ENCODE measurements at regions of chr14 and their contacts with region 1.

Region 1: GRCh38 chr14:69460093-69460701 is 24.3 kb upstream of the PLEKHD1 start:
- DNase-seq: peak; percentile 25
- ATAC-seq: peak; percentile 96
- H3K4me3 ChIP-seq: no peak overlapping the region
- H3K27ac ChIP-seq: no peak overlapping the region
- H3K4me1 ChIP-seq: no peaks in the 10 kb centered on the region
- H3K27me3 ChIP-seq: no peaks in the 10 kb centered on the region
- CTCF ChIP-seq: peak; percentile 69 to 91 (median 81); a peak in 5 of 6 replicates
- EP300 ChIP-seq: no peak
- POLR2A ChIP-seq: no peak
- RAD21 ChIP-seq: peak; percentile 92

Region 2: GRCh38 chr14:69247676-69248440 is 212.3 kb before region 1 on chr14:
- CTCF ChIA-PET with region 1: interaction called, 126 read pairs
- POLR2A ChIA-PET with region 1: no interaction called
- RAD21 ChIA-PET with region 1: interaction called, 55 read pairs
- SMC1A ChIA-PET with region 1: interaction called, 62 read pairs
- in situ Hi-C with region 1: loop called (anchors 5 kb)
- intact Hi-C with region 1: no loop called
- DNase-seq: no peak
- ATAC-seq: no peak
- H3K4me3 ChIP-seq: no peak overlapping the region
- H3K27ac ChIP-seq: no peak overlapping the region
- H3K4me1 ChIP-seq: no peaks in the 10 kb centered on the region
- H3K27me3 ChIP-seq: no peaks in the 10 kb centered on the region
- CTCF ChIP-seq: peak in 2 of 3 experiments; percentile 16 to 17; a peak in 2 of 6 replicates
- EP300 ChIP-seq: no peak
- POLR2A ChIP-seq: no peak
- RAD21 ChIP-seq: peak; percentile 28; the same call in 1 of the 2 replicates

Region 3: DNA sequence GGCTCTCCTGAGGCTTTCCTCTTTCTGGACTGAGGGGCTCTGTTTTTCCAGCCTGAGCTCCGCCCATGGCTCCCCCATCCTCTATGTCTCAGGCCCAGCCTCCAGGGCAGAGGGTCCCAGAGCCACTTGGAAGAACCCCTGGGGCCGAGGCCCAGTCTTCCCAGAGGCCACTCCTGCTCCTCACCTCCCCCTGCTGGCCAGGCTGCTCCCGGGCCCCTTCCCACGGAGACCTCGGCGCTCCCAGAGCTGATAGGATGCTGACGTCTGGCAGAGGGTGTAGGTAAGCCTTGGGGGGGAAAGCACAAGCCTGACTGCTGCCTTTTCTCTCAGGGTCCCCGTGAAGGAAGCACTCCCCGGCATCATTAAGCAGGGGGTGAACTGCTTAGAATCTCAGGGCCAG is 113.5 kb before region 1 on chr14:
- CTCF ChIA-PET with region 1: interaction called, 12 read pairs
- POLR2A ChIA-PET with region 1: no interaction called
- RAD21 ChIA-PET with region 1: interaction called, 11 read pairs
- SMC1A ChIA-PET with region 1: interaction called, 12 read pairs
- in situ Hi-C with region 1: no loop called
- intact Hi-C with region 1: no loop called
- DNase-seq: no peak
- ATAC-seq: peak; percentile 34; the same call in 2 of the 3 replicates
- H3K4me3 ChIP-seq: no peak overlapping the region
- H3K27ac ChIP-seq: no peak overlapping the region
- H3K4me1 ChIP-seq: peaks cover 7% of the 10 kb centered on the region
- H3K27me3 ChIP-seq: no peaks in the 10 kb centered on the region
- CTCF ChIP-seq: peak; percentile 44 to 64 (median 49)
- EP300 ChIP-seq: no peak
- POLR2A ChIP-seq: no peak
- RAD21 ChIP-seq: peak; percentile 36; the same call in 1 of the 2 replicates

Region 4: DNA sequence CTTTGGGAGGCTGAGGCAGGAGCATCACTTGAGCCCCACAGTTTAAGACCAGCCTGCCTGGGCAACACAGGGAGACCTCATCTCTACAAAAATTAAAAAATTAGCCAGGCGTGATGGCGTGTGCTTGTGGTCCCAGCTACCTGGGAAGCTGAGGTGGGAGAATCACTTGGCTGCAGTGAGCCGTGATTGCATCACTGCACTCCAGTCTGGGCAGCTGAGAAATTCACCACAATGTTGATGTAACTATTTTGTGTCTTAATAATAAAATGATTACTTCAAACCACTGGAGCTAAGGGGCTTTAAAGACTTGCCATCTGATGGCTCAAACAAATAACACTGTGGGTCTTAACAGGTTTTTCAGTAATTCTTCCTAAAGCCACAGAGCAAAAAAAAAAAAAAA is 72.9 kb before region 1 on chr14:
- CTCF ChIA-PET with region 1: interaction called, 4 read pairs
- POLR2A ChIA-PET with region 1: interaction called, 4 read pairs
- RAD21 ChIA-PET with region 1: interaction called, 11 read pairs
- SMC1A ChIA-PET with region 1: interaction called, 9 read pairs
- in situ Hi-C with region 1: no loop called
- intact Hi-C with region 1: no loop called
- DNase-seq: no peak
- ATAC-seq: no peak
- H3K4me3 ChIP-seq: no peak overlapping the region
- H3K27ac ChIP-seq: no peak overlapping the region
- H3K4me1 ChIP-seq: peaks cover 12% of the 10 kb centered on the region
- H3K27me3 ChIP-seq: no peaks in the 10 kb centered on the region
- CTCF ChIP-seq: no peak
- EP300 ChIP-seq: no peak
- POLR2A ChIP-seq: no peak
- RAD21 ChIP-seq: no peak

Region 5: DNA sequence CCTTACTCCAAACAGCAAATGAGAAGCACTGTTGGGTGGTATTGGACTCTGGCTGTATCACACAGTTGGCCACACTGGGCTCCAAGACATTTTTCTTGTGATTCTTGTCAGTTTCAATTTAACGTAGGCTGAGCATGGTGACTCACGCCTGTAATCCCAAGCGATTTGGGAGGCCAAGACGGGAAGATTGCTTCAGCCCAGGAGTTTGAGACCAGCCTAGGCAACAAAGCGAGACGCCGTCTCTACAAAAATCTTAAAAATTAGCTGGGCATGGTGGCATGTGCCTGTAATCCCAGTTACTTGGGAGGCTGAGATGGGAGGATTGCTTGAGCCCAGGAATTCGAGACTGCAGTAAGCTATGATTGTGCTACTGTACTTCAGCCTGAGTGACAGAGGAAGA is 11.0 kb before region 1 on chr14:
- CTCF ChIA-PET with region 1: interaction called, 17 read pairs
- POLR2A ChIA-PET with region 1: interaction called, 3 read pairs
- RAD21 ChIA-PET with region 1: interaction called, 3 read pairs
- SMC1A ChIA-PET with region 1: interaction called, 13 read pairs
- in situ Hi-C with region 1: no loop called
- intact Hi-C with region 1: no loop called
- DNase-seq: no peak
- ATAC-seq: no peak
- H3K4me3 ChIP-seq: no peak overlapping the region
- H3K27ac ChIP-seq: no peak overlapping the region
- H3K4me1 ChIP-seq: no peaks in the 10 kb centered on the region
- H3K27me3 ChIP-seq: no peaks in the 10 kb centered on the region
- CTCF ChIP-seq: no peak
- EP300 ChIP-seq: no peak
- POLR2A ChIP-seq: no peak
- RAD21 ChIP-seq: no peak

Region 6: DNA sequence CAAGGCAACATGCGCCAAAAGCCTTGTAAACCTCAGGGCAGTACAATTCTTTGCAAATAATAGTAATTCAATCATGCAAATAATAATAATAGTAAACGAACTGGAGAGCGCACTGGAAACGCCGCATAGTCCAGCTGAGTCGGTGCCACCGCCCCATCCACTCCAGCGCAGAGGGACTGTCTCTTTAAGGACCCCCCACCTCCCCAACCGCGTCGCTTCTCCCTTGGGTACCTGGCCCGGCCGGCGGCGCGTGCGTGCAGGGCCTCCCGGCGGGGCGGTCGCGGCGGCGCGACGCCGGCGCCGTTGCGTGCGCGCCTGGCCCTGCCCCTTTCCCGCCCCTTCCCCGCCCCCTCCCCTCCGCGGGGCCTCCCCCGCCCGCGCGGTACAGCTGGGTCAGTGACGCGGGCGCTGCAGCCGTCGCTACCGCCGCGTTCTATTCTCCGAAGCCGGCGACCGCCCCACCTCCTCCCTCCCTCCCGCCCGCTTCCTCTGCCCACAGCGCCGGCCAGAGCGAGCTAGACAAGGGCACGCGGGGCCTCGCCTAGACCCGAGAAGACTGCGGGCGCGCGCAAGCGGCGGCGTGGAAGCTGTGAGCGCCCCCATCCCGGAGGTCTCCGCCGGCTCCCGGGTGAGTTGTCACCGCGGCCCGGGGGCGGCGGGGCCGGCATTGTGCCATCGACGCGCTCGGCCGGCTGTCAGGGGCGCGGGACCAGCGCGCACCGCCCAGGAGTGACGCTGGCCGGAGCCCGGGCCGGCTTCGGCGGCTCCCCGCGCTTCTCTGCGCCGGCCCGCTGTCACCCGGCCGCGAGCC is 151.2 kb after region 1 on chr14 and contains the start of gene SUSD6:
- CTCF ChIA-PET with region 1: no interaction called
- POLR2A ChIA-PET with region 1: no interaction called
- RAD21 ChIA-PET with region 1: no interaction called
- SMC1A ChIA-PET with region 1: no interaction called
- in situ Hi-C with region 1: no loop called
- intact Hi-C with region 1: no loop called
- DNase-seq: no peak
- ATAC-seq: peak; percentile 62
- H3K4me3 ChIP-seq: peak within 1 kb of the TSS; percentile 88
- H3K27ac ChIP-seq: peak within 1 kb of the TSS; percentile 97
- H3K4me1 ChIP-seq: peaks cover 21% of the 10 kb centered on the region
- H3K27me3 ChIP-seq: no peaks in the 10 kb centered on the region
- CTCF ChIP-seq: no peak
- EP300 ChIP-seq: no peak
- POLR2A ChIP-seq: peak; percentile 76
- RAD21 ChIP-seq: no peak
- polyA plus RNA-seq, gene SUSD6: 6.6 to 9.4 TPM